ENCODE measurements at regions of chr1 and their contacts with region 1.

Region 1: DNA sequence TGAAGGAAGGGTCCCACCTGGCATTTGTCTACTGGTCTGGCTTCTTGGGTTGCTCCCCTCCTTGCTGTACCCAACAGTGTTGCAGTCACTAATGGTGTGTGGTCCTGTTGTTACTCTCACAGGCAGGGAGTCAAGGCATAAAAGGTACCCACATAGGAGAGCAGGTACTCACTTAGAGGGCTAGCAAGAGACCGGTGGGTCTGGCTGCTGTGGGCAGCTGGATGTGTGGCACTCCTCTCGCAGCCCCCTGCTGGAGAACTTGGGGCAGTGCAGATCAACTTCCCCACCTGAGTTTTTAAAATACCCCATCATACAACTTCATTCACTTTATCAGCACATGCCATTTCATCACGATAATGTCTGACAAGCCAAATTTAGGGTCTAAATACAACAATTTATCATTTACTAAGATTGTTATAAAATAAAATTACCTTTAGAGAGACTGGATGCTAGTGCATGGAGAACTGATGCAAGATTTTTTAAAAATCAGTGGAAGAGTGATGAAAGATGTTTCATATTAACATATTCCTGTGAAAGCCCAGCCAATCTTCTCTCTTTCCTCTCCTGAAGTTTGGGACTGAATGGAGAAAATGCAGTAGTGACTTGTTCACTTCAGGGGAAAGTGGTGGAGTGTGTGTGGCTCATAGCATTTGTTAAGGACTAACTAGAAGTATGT is 42.8 kb downstream of the ACP6 start:
- DNase-seq: peak; percentile 82
- CTCF ChIP-seq: peak; percentile 82

Region 2: DNA sequence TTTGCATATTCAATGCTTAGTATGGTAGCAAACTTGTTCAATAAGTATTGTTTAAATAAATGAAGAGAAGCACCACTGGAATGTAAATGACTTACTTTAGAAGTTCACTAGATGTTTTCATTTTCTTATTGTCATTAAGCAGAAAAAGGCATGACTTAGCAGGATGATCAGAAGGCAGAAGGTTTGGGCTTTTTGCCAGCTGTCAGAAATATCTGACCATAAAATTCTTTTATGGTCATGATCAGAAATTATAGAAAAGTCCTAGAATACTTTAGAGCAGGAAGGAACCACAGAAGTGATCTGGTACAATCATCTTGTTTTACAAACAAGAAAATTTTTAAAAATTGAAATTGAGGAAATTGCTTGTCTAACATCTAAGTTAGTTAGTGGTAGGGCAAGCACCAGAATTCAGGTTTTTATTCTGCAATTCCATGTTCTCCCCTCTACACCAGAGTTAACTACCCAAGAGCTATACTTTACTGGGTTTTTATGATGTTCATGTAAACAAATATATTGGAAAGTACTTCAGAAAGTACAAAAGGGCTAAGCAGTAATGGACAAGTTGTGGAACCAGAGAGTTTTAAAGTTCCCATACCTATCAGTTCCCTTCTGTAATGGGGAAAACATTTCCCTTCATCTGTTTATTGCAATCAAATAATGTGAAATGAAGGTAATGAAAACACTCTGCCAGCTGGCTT is 412.6 kb before region 1 on chr1:
- CTCF ChIA-PET with region 1: no interaction called
- POLR2A ChIA-PET with region 1: no interaction called
- DNase-seq: no peak
- CTCF ChIP-seq: no peak

Region 3: GRCh38 chr1:147611021-147611426 is 16.5 kb before region 1 on chr1:
- CTCF ChIA-PET with region 1: interaction called, 37 read pairs
- POLR2A ChIA-PET with region 1: no interaction called
- DNase-seq: peak; percentile 52
- CTCF ChIP-seq: no peak